H1 (cell line): ENCODE measurements at regions of chr9 and their contacts with region 1.

Region 1: DNA sequence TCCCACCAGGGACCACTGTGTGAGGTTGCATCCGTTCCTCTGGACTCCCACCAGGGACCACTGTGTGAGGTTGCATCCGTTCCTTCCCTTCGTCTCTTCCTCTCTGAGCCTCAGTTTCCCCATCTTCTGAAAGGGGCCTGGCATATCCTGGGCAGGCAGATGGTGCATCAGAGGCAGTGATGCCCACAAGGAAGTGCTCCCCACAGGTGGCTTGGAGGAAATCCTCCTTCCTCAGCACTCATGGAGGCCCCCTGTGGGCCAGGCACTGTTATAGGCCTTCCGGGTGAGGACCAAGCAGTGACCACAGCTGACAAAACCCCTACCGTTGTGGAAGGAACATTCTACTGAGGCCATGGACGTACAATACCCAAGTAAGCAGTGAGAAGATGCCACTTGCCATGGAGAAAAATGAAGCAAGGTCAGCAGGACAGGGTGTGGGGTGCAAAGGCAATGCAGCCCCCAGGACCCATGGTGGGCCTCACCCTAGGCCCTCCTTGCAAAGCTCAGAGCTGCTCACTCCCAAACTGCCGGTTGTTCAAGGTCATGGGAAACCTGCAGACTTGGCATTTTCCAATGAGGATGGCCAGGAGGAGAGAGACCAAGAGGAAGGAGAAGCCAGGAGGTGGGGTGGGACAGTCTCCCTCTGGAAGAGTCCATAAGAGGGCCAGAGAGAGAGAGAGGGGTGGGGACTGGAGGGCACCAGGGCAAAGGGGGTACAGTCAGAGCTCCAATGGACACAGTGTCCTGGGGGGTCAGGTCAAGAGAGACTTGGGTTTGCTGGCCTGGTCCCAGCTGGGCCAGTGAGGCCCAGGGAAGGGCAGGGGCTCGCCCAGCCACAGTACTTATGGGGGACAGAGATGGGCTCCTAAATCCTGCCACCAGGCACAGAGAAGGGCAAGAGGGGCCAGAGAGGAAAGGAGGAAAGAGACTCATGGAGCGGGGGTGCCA is 51.1 kb downstream of the C9orf50 start:
- DNase-seq: peak in 1 of 2 experiments; percentile 56
- H3K4me3 ChIP-seq: peak overlapping the region; percentile 16 to 63 (median 24); a peak in 5 of 8 replicates
- H3K27ac ChIP-seq: no peak overlapping the region
- H3K4me1 ChIP-seq: peaks cover 7 to 28% (median 17%) of the 10 kb centered on the region in 4 experiments
- H3K27me3 ChIP-seq: peaks cover 0 to 5% (median 1%) of the 10 kb centered on the region in 4 experiments; a peak in 2 of 7 replicates
- CTCF ChIP-seq: peak; percentile 35 to 57 (median 48)
- EP300 ChIP-seq: no peak
- POLR2A ChIP-seq: no peak
- RAD21 ChIP-seq: peak in 1 of 2 experiments; percentile 55; a peak in 1 of 4 replicates

Region 2: GRCh38 chr9:129458663-129459555 is 110.9 kb before region 1 on chr9:
- CTCF ChIA-PET with region 1: no interaction called
- POLR2A ChIA-PET with region 1: no interaction called
- DNase-seq: no peak
- H3K4me3 ChIP-seq: peak overlapping the region in 2 of 4 experiments; percentile 32 to 67; a peak in 4 of 8 replicates
- H3K27ac ChIP-seq: no peak overlapping the region
- H3K4me1 ChIP-seq: peaks cover 3 to 22% (median 19%) of the 10 kb centered on the region in 4 experiments
- H3K27me3 ChIP-seq: peaks cover 0 to 16% (median 9%) of the 10 kb centered on the region in 4 experiments; a peak in 6 of 7 replicates
- CTCF ChIP-seq: no peak
- EP300 ChIP-seq: no peak
- POLR2A ChIP-seq: no peak
- RAD21 ChIP-seq: no peak; a peak in 1 of 4 replicates

Region 3: DNA sequence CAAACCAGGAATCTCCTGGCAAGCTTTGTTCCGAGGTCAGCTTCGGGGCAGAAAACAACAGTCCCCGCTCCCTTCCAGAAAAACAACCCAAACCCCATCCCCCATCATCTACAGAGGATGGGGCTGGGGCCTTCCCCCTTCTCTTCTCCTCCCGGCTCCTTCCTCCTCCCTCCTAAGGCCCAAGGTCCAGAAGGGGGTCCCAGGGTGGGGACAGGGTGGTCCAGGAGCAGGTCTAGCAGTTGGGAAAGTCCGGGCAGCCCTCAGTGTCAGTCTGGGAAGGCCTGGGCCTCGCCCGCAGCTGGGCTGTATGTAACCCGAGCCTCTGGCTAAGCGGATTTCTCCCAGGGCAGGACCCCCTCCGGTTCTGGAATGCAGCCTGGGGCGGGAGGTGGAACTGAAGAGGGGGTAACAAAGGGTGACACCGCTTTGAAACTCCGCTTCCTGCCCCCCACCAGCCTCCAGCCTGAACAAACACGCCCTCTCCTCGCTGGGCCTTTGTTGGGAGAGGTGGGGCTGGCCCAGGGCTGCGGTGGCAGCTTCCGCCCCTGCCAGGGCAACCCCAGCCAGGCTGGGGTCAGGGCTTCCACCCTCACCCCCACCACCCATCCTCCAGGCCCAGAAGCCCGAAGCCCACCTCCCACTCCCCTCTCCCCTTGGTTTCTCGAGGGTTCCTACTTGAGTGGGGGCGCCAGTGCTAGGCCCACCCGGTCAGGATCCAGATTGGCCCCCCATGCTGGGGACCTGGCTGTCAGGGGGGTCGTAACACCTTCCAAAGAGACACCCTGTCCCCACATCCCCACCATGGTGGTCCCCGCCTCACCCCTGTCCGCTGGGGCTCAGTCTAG is 12.4 kb before region 1 on chr9:
- CTCF ChIA-PET with region 1: interaction called, 6 read pairs
- POLR2A ChIA-PET with region 1: interaction called, 18 read pairs
- DNase-seq: peak; percentile 94 to 96
- H3K4me3 ChIP-seq: peak overlapping the region; percentile 2 to 50 (median 36); a peak in 7 of 8 replicates
- H3K27ac ChIP-seq: peak overlapping the region; percentile 76
- H3K4me1 ChIP-seq: peaks cover 7 to 57% (median 41%) of the 10 kb centered on the region in 4 experiments
- H3K27me3 ChIP-seq: no peaks in the 10 kb centered on the region
- CTCF ChIP-seq: no peak
- EP300 ChIP-seq: peak; percentile 34 to 91; a peak in 2 of 3 replicates
- POLR2A ChIP-seq: peak in 1 of 2 experiments; percentile 44; a peak in 1 of 3 replicates
- RAD21 ChIP-seq: peak; percentile 0 to 1; a peak in 1 of 4 replicates

Region 4: GRCh38 chr9:129584136-129584535 is 14.4 kb after region 1 on chr9:
- CTCF ChIA-PET with region 1: interaction called, 37 read pairs
- POLR2A ChIA-PET with region 1: interaction called, 3 read pairs
- DNase-seq: peak in 1 of 2 experiments; percentile 71
- H3K4me3 ChIP-seq: no peak overlapping the region
- H3K27ac ChIP-seq: no peak overlapping the region
- H3K4me1 ChIP-seq: peaks cover 0 to 8% (median 1%) of the 10 kb centered on the region in 4 experiments; a peak in 3 of 7 replicates
- H3K27me3 ChIP-seq: no peaks in the 10 kb centered on the region; a peak in 1 of 7 replicates
- CTCF ChIP-seq: no peak
- EP300 ChIP-seq: no peak
- POLR2A ChIP-seq: no peak
- RAD21 ChIP-seq: no peak

Region 5: GRCh38 chr9:129591916-129592315 is 22.1 kb after region 1 on chr9:
- CTCF ChIA-PET with region 1: interaction called, 37 read pairs
- POLR2A ChIA-PET with region 1: interaction called, 3 read pairs
- DNase-seq: no peak
- H3K4me3 ChIP-seq: no peak overlapping the region
- H3K27ac ChIP-seq: no peak overlapping the region
- H3K4me1 ChIP-seq: peaks cover 0 to 14% (median 8%) of the 10 kb centered on the region in 4 experiments; a peak in 6 of 7 replicates
- H3K27me3 ChIP-seq: peaks cover 0 to 12% (median 9%) of the 10 kb centered on the region in 4 experiments; a peak in 4 of 7 replicates
- CTCF ChIP-seq: no peak
- EP300 ChIP-seq: no peak
- POLR2A ChIP-seq: no peak
- RAD21 ChIP-seq: no peak

Region 6: GRCh38 chr9:129761901-129762364 is 192.2 kb after region 1 on chr9:
- CTCF ChIA-PET with region 1: no interaction called
- POLR2A ChIA-PET with region 1: no interaction called
- DNase-seq: no peak
- H3K4me3 ChIP-seq: no peak overlapping the region
- H3K27ac ChIP-seq: no peak overlapping the region
- H3K4me1 ChIP-seq: peaks cover 0 to 2% (median 0%) of the 10 kb centered on the region in 4 experiments; a peak in 1 of 7 replicates
- H3K27me3 ChIP-seq: no peaks in the 10 kb centered on the region
- CTCF ChIP-seq: no peak
- EP300 ChIP-seq: no peak
- POLR2A ChIP-seq: no peak
- RAD21 ChIP-seq: no peak